Heart right ventricle (tissue), 16 donors: ENCODE measurements at regions of chr3 and their contacts with region 1.

Region 1: GRCh38 chr3:157493627-157494550 is 9.3 kb downstream of the VEPH1 start:
- DNase-seq: no peak
- ATAC-seq: peak in 1 of 8 donors; percentile 55
- H3K4me3 ChIP-seq: no peak overlapping the region
- H3K27ac ChIP-seq: no peak overlapping the region
- H3K4me1 ChIP-seq: peaks cover 0 to under 1% (median 0%) of the 10 kb centered on the region in 9 donors
- H3K27me3 ChIP-seq: peaks cover 0 to 17% (median 4%) of the 10 kb centered on the region in 7 donors
- CTCF ChIP-seq: peak; percentile 20 to 77 (median 64)

Region 2: GRCh38 chr3:157064402-157064801 is 429.5 kb before region 1 on chr3:
- intact Hi-C with region 1: loop called in 1 of 10 experiments (anchors 10 kb)
- DNase-seq: no peak
- ATAC-seq: peak in 2 of 8 donors; percentile 12 to 25
- H3K4me3 ChIP-seq: no peak overlapping the region
- H3K27ac ChIP-seq: no peak overlapping the region
- H3K4me1 ChIP-seq: peaks cover 0 to 11% (median 0%) of the 10 kb centered on the region in 9 donors
- H3K27me3 ChIP-seq: no peaks in the 10 kb centered on the region
- CTCF ChIP-seq: no peak

Region 3: GRCh38 chr3:157330206-157330605 is 163.7 kb before region 1 on chr3:
- intact Hi-C with region 1: no loop called
- DNase-seq: no peak
- ATAC-seq: no peak
- H3K4me3 ChIP-seq: no peak overlapping the region
- H3K27ac ChIP-seq: no peak overlapping the region
- H3K4me1 ChIP-seq: peaks cover 0 to 9% (median 0%) of the 10 kb centered on the region in 9 donors
- H3K27me3 ChIP-seq: no peaks in the 10 kb centered on the region
- CTCF ChIP-seq: no peak

Region 4: DNA sequence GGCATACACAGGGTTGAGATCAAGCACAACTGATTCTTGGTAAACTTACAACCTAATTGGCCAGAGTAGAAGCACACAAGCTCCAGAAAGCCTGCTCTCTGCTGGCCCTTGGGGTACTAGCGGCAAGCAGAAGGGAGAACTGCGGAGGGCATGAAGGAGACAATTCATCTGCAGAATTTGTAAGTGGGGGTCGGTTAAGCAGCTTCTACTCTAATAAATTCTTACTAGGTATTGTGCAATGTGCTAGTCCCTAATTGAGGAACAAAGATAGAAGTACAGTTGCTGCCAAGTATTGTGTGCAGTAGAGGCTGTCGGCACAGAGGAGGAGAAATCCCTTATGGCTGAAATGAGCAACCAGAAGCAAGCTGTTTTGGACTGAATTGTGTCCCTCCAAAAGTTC is 100.5 kb after region 1 on chr3:
- intact Hi-C with region 1: no loop called
- DNase-seq: no peak
- ATAC-seq: peak in 6 of 8 donors; percentile 35 to 88 (median 67)
- H3K4me3 ChIP-seq: no peak overlapping the region
- H3K27ac ChIP-seq: no peak overlapping the region
- H3K4me1 ChIP-seq: peaks cover 0 to 9% (median 0%) of the 10 kb centered on the region in 9 donors
- H3K27me3 ChIP-seq: peaks cover 0 to 20% (median 3%) of the 10 kb centered on the region in 7 donors
- CTCF ChIP-seq: peak in 1 of 9 donors; percentile 11